OCI-LY7 (cell line): ENCODE measurements at regions of chr6 and their contacts with region 1.

Region 1: GRCh38 chr6:15621203-15622044 is 41.4 kb downstream of the DTNBP1 start:
- DNase-seq: no peak
- H3K4me3 ChIP-seq: no peak overlapping the region
- H3K27ac ChIP-seq: no peak overlapping the region
- H3K4me1 ChIP-seq: no peaks in the 10 kb centered on the region
- CTCF ChIP-seq: no peak

Region 2: DNA sequence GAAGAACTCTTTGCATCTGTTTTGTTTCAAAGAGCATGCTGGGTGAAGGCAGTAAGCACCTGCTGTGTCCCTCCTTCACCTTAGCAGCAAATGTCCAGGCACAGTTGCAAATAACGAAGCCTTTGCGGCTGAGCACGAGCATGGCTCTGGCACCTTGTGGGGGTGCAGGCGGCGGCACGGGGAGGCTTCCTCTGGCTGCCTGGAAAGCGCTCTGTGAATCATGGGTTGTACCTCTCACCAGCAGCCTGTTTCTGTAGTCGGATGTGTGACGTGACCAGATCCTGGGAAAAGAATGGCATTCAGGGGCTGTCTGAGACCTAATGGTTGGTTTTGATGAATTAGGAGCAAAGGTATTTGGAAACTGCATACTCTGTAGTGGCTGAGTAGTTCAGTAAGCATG is 103.4 kb before region 1 on chr6:
- CTCF ChIA-PET with region 1: no interaction called
- POLR2A ChIA-PET with region 1: no interaction called
- intact Hi-C with region 1: loop called (anchors 5 kb)
- DNase-seq: no peak
- H3K4me3 ChIP-seq: no peak overlapping the region
- H3K27ac ChIP-seq: no peak overlapping the region
- H3K4me1 ChIP-seq: peaks cover 22% of the 10 kb centered on the region
- CTCF ChIP-seq: no peak